ENCODE measurements at regions of chr5 and their contacts with region 1.

Region 1: GRCh38 chr5:37412515-37413277 is 33.6 kb downstream of the WDR70 start:
- DNase-seq: peak; percentile 49
- H3K4me3 ChIP-seq: no peak overlapping the region
- CTCF ChIP-seq: peak; percentile 74

Region 2: GRCh38 chr5:37214550-37214949 is 198.1 kb before region 1 on chr5:
- CTCF ChIA-PET with region 1: no interaction called
- POLR2A ChIA-PET with region 1: no interaction called
- DNase-seq: no peak
- H3K4me3 ChIP-seq: no peak overlapping the region
- CTCF ChIP-seq: no peak

Region 3: DNA sequence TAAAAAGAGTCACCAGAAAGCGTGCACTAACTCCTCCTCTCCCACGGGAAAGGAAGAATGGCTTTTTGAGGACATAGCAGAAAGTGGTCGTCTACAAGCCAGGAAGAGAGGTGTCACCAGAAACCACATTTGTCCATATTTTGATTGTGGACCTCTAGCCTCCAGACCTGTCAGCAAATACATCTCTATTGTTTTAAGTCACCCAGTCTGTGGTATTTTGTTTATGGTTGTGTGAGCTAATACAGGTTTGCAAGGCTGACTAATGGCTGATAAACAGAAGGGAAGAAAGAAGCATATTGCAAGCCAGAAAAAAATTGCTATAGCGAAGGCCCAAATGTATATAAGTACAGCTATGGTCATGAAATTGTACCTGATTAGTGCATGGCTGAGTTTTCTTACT is 12.2 kb before region 1 on chr5:
- CTCF ChIA-PET with region 1: interaction called, 24 read pairs
- POLR2A ChIA-PET with region 1: no interaction called
- DNase-seq: no peak
- H3K4me3 ChIP-seq: no peak overlapping the region
- CTCF ChIP-seq: no peak

Region 4: DNA sequence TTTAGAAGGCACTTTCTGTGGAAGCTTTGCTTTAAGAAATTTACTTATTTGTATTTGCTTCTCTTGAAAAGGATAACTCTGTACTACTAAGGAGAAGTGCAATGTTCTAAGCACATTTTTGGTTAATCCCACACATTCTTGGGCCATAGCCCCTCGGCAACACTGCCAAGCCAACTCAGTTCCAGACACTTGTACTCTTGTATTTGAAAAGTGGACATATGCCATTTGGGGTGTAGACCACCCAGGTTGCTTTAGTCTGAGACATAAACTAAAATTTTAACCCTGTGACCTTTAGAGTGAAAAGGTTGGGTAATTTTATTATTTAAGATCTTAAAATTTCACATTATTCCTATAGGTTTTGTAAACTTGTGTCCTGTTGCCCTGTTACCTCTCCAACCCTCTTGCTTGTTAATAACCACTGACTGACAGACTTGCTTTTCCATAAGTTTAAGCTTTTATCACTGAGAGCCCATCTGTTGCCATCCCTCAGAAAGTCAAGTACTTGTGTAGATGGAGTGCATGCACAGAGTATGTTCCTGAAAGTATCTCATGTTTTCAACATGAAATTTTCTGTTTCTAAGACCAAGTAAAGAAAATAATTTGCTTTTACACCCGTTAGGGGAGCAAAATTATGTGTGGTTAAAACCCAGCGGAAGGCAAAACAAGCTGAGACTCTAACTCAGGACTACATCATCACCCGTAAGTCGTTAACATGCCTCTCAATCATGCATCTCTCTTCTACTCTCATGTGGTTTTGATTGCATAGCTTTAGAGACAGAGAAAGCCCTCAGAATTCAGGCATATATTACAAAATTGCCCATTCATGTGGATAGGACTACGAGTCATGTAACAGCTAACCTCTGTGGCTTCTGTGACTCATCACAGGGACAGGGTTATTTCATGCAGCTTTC is 309.8 kb after region 1 on chr5:
- CTCF ChIA-PET with region 1: interaction called, 36 read pairs
- POLR2A ChIA-PET with region 1: no interaction called
- DNase-seq: peak; percentile 88
- H3K4me3 ChIP-seq: no peak overlapping the region
- CTCF ChIP-seq: no peak

Region 5: GRCh38 chr5:37774912-37775483 is 362.3 kb after region 1 on chr5:
- CTCF ChIA-PET with region 1: interaction called, 21 read pairs
- POLR2A ChIA-PET with region 1: interaction called, 3 read pairs
- DNase-seq: no peak
- H3K4me3 ChIP-seq: no peak overlapping the region
- CTCF ChIP-seq: peak; percentile 50

Region 6: DNA sequence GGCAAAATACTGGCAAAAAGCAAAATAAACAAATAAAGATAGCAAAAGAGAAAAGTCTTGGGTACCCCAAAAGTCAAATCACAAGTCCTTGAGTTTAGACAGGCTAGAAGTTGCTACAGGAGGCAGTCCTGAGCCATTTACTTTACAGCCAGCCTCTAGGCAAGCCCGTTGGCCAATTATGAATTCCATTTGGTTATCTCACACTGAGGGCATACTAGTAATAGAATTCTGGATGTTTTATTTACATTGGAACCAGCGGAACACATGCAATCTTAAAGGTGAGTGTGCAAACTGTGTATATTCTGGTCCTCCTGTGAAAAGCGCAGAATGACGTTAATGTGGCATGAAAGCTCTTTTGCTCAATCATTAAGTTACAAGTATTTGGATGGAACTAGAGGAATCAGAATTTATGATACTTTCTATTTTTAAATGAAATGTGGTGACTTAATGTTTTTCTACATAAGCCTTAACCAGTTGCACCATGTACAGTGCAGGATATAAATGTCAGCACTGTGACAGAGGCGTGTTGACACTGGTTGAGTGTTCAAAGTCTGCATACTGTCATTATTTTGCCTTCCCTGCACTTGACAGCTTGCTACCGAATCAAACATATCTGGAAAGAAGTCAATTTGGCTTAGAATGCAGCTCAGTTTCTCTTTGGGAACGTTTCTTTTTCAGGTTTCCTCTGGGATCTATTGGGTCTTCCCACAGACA is 419.3 kb after region 1 on chr5:
- CTCF ChIA-PET with region 1: interaction called, 33 read pairs
- POLR2A ChIA-PET with region 1: no interaction called
- DNase-seq: no peak
- H3K4me3 ChIP-seq: no peak overlapping the region
- CTCF ChIP-seq: no peak

Region 7: GRCh38 chr5:38193015-38193581 is 780.4 kb after region 1 on chr5:
- CTCF ChIA-PET with region 1: interaction called, 96 read pairs
- POLR2A ChIA-PET with region 1: no interaction called
- DNase-seq: no peak
- H3K4me3 ChIP-seq: no peak overlapping the region
- CTCF ChIP-seq: peak; percentile 93

Measured in AG04449 (cell line).